ENCODE measurements at regions of chrX and their contacts with region 1.

Region 1: GRCh38 chrX:14029425-14030173 is at the start of gene GEMIN8:
- ATAC-seq: peak; percentile 89 to 96 (median 91)
- H3K4me3 ChIP-seq: peak within 1 kb of the TSS; percentile 47 to 57 (median 55)
- H3K27ac ChIP-seq: peak within 1 kb of the TSS; percentile 82 to 93
- H3K4me1 ChIP-seq: peaks cover 28 to 44% of the 10 kb centered on the region in 2 donors
- total RNA-seq, gene GEMIN8: 7.5 to 25.0 (median 10.2) TPM

Region 2: DNA sequence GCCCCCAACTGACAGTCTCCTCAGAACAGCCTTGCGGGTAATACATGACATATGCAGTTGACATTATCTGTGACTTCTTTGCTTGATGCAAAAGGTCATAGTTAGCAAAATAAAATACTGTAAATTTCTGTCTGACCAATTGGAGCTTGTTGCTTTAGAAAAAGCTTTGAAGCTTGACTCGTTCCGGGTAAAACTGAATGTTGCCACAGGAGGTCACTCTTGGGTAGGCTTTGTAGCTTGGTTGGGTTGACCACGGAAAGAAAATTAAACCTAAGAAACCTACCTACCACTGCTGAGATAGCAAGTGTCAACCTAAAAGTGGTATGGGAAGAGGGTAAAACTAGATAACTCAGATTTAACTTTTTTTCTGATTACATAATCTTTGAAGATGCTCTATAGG is 1215.2 kb before region 1 on chrX:
- in situ Hi-C with region 1: loop called in 1 of 9 experiments (anchors 25 kb)
- ATAC-seq: peak in 4 of 8 experiments; percentile 32 to 59 (median 42)
- H3K4me3 ChIP-seq: no peak overlapping the region
- H3K27ac ChIP-seq: no peak overlapping the region
- H3K4me1 ChIP-seq: no peaks in the 10 kb centered on the region

Region 3: DNA sequence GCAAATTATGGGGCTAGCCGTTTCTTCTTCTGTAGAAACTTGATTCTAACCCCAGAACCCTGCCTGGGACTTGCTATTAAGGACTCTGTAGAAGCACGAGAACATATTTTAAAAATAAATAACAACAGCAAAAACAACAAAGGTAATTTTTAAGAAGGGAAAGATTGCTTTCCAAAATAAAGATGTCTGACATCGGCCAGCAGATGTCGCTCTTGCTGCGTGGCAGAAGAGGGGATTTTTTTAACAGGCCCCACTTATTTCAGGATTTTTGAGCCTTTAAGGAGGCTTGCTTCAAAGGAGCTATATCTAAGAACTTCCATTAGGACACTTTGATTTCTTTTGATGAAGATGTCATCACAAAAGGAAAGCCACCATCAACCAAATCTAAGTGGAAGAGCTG is 523.0 kb before region 1 on chrX:
- in situ Hi-C with region 1: loop called in 6 of 9 experiments (anchors 25 kb)
- ATAC-seq: no peak
- H3K4me3 ChIP-seq: no peak overlapping the region
- H3K27ac ChIP-seq: no peak overlapping the region
- H3K4me1 ChIP-seq: no peaks in the 10 kb centered on the region

Region 4: GRCh38 chrX:13653022-13653693 is 376.4 kb before region 1 on chrX and contains the start of gene TCEANC:
- in situ Hi-C with region 1: loop called in 2 of 9 experiments (anchors 25 kb)
- ATAC-seq: peak; percentile 91 to 98 (median 96)
- H3K4me3 ChIP-seq: peak within 1 kb of the TSS; percentile 51 to 82 (median 57)
- H3K27ac ChIP-seq: peak within 1 kb of the TSS; percentile 90 to 93
- H3K4me1 ChIP-seq: peaks cover 3 to 16% of the 10 kb centered on the region in 2 donors
- total RNA-seq, gene TCEANC: 1.9 to 7.0 (median 3.6) TPM

Region 5: DNA sequence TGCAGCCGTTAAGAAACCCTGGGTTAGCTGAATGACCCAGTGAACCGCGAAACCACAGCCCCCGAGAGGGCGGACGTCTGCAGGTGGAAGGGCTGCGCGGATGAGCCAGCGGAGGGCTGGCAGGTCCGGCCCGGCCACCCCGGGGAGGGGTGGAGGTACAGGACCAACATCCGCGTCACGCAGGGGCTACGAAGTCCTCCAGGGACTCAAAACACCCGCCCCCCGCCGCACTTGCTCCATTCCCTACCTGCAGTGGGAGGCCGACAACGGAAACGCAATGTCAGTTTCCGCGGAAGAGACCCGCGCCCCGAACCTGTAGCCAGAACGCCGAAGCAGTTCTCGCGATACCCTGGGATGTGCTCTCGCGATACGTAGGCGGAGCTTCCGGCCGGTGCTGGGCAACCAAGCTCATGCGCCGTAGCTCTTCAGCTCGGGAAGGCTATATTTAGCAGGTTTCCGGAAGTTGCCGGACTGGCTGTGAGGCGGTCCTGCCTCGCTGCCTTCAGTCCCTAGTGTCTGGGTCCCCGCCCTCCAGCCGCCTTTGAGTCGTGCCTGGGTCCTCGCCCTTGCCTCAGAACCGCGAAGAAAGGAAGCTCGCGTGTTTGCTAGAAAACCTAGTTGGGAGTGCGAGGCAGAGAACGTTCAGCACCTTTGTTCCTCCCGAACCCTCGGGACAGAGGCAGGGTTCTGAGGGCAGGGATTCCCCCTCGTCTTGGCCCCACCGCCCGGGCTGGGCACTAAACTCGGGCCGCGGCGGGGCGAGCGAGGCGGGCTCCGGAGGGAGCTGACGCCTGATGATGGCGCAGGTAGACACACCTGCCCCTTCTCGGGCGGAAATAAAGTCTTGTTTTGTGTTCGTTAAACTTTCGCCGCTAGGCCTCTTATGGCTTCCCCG is 295.1 kb before region 1 on chrX and contains the starts of genes OFD1 and TRAPPC2:
- in situ Hi-C with region 1: loop called in 1 of 9 experiments (anchors 25 kb)
- ATAC-seq: peak; percentile 94 to 99 (median 98)
- H3K4me3 ChIP-seq: peak within 1 kb of the TSS; percentile 78 to 92 (median 88)
- H3K27ac ChIP-seq: peak within 1 kb of the TSS; percentile 91 to 95
- H3K4me1 ChIP-seq: peaks cover 0 to 8% of the 10 kb centered on the region in 2 donors
- total RNA-seq, gene OFD1: 10.5 to 35.0 (median 23.8) TPM
- total RNA-seq, gene TRAPPC2: 10.9 to 66.5 (median 29.4) TPM

Region 6: GRCh38 chrX:13750204-13750603 is 279.4 kb before region 1 on chrX:
- in situ Hi-C with region 1: loop called in 3 of 9 experiments (anchors 25 kb)
- ATAC-seq: peak in 2 of 8 experiments; percentile 25 to 27
- H3K4me3 ChIP-seq: no peak overlapping the region
- H3K27ac ChIP-seq: no peak overlapping the region
- H3K4me1 ChIP-seq: no peaks in the 10 kb centered on the region

Region 7: DNA sequence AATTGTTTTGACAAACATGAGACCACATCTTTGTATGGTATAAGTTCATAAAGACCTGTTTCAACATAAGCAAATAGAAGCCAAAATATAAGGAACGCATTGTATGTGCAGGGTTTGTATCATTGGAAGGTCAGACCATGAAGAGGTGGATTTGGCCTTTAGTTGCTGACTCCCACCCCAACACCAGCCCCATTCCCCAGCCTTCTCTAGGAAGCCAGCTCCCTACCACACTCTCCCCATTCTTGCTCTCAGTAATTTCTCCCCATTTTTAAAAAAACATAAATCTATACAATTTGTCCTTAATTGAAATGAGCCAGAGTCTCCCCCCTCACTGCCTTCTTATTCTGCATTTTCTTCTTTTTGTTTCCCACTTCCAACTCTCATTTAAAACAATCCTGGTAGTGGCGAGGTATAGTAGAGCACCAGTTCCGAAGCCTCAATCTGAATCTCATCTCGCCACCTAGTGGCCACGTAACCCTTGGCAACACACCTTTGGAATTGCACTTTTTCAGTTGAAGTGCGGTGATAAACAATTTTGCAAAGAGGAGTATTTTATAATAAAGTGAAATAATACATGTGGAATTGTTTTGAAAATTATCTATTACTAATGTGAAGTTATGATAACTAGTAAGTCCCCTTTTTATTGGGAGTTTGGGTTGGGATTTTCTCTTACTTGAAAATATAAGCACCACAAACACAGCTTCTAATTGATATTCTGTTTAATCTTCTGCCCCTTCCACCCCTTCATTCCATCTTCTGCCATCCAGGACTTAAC is 1113.6 kb after region 1 on chrX:
- in situ Hi-C with region 1: loop called in 1 of 9 experiments (anchors 25 kb)
- ATAC-seq: peak in 6 of 8 experiments; percentile 22 to 65 (median 42)
- H3K4me3 ChIP-seq: no peak overlapping the region
- H3K27ac ChIP-seq: no peak overlapping the region
- H3K4me1 ChIP-seq: no peaks in the 10 kb centered on the region

Measured in motor neuron (in vitro differentiated cells).